ENCODE measurements at regions of chr12 and their contacts with region 1.

Region 1: GRCh38 chr12:132153501-132154340 is 9.5 kb downstream of the NOC4L start:
- DNase-seq: peak; percentile 47 to 88 (median 75)
- ATAC-seq: peak; percentile 95
- H3K4me3 ChIP-seq: no peak overlapping the region
- H3K4me3 Mint-ChIP-seq: peak overlapping the region; percentile 58
- H3K27ac ChIP-seq: no peak overlapping the region
- H3K27ac Mint-ChIP-seq: no peak overlapping the region
- H3K4me1 ChIP-seq: peaks cover 5% of the 10 kb centered on the region
- H3K4me1 Mint-ChIP-seq: peaks cover 2% of the 10 kb centered on the region
- H3K27me3 ChIP-seq: no peaks in the 10 kb centered on the region
- H3K27me3 Mint-ChIP-seq: no peaks in the 10 kb centered on the region
- CTCF ChIP-seq: peak; percentile 92

Region 2: GRCh38 chr12:132132609-132133430 is 20.9 kb before region 1 on chr12:
- CTCF ChIA-PET with region 1: no interaction called
- POLR2A ChIA-PET with region 1: no interaction called
- intact Hi-C with region 1: no loop called
- DNase-seq: no peak
- ATAC-seq: no peak
- H3K4me3 ChIP-seq: no peak overlapping the region
- H3K4me3 Mint-ChIP-seq: no peak overlapping the region
- H3K27ac ChIP-seq: no peak overlapping the region
- H3K27ac Mint-ChIP-seq: no peak overlapping the region
- H3K4me1 ChIP-seq: no peaks in the 10 kb centered on the region
- H3K4me1 Mint-ChIP-seq: no peaks in the 10 kb centered on the region
- H3K27me3 ChIP-seq: no peaks in the 10 kb centered on the region
- H3K27me3 Mint-ChIP-seq: no peaks in the 10 kb centered on the region
- CTCF ChIP-seq: no peak

Region 3: GRCh38 chr12:132210223-132211055 is 56.7 kb after region 1 on chr12:
- CTCF ChIA-PET with region 1: interaction called, 10 read pairs
- POLR2A ChIA-PET with region 1: no interaction called
- intact Hi-C with region 1: no loop called
- DNase-seq: peak in 1 of 9 experiments; percentile 23
- ATAC-seq: no peak
- H3K4me3 ChIP-seq: no peak overlapping the region
- H3K4me3 Mint-ChIP-seq: no peak overlapping the region
- H3K27ac ChIP-seq: no peak overlapping the region
- H3K27ac Mint-ChIP-seq: no peak overlapping the region
- H3K4me1 ChIP-seq: peaks cover 5% of the 10 kb centered on the region
- H3K4me1 Mint-ChIP-seq: peaks cover 4% of the 10 kb centered on the region
- H3K27me3 ChIP-seq: peaks cover 3 to 6% of the 10 kb centered on the region in 2 experiments
- H3K27me3 Mint-ChIP-seq: peaks cover 8% of the 10 kb centered on the region
- CTCF ChIP-seq: no peak

Region 4: GRCh38 chr12:132342251-132343227 is 188.8 kb after region 1 on chr12:
- CTCF ChIA-PET with region 1: no interaction called
- POLR2A ChIA-PET with region 1: no interaction called
- intact Hi-C with region 1: loop called in 1 of 2 experiments (anchors 10 kb)
- DNase-seq: peak in 2 of 9 experiments; percentile 14 to 29
- ATAC-seq: peak; percentile 31
- H3K4me3 ChIP-seq: no peak overlapping the region
- H3K4me3 Mint-ChIP-seq: no peak overlapping the region
- H3K27ac ChIP-seq: no peak overlapping the region
- H3K27ac Mint-ChIP-seq: no peak overlapping the region
- H3K4me1 ChIP-seq: no peaks in the 10 kb centered on the region
- H3K4me1 Mint-ChIP-seq: peaks cover 12% of the 10 kb centered on the region
- H3K27me3 ChIP-seq: no peaks in the 10 kb centered on the region
- H3K27me3 Mint-ChIP-seq: peaks cover 14% of the 10 kb centered on the region
- CTCF ChIP-seq: no peak

Region 5: DNA sequence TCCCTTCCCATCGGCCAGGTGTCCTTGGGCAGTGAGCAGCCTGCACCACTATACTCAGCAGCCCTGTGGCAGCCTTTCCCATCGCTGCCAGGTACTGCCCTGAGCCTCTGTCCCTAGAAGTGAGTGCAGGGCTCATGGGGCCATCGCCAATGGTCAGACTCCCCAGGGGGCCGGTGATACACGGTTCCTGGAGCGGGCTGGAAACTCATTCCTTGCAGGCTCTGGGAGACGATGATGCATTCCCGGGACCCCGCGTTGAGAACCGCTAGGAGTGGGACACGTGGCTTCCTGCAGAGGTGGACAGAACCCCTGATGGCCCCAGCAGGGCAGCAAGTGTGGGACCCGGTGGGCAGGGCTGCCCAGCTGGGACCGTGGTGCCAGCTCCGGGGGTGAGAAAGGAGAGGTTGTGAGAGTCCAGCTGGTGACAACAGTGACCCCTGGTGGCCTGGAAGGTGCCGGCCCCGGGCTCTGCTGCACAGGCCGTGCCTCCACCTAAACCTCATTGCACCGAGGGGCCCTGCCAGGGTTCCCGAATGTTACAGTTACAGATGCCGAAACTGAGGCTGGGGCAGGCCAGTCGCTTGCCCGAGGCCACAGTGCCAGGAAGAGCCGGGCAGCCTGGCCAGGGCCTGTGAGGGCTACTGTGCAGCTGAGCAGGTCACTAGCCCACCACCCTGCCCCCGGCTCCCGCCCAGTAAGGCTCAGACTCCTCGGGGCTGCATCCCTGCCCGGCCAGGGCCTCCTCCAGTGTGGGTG is 370.0 kb after region 1 on chr12:
- CTCF ChIA-PET with region 1: interaction called, 6 read pairs
- POLR2A ChIA-PET with region 1: no interaction called
- intact Hi-C with region 1: loop called in 1 of 2 experiments (anchors 1 kb)
- DNase-seq: peak; percentile 54 to 86 (median 74)
- ATAC-seq: peak; percentile 71
- H3K4me3 ChIP-seq: no peak overlapping the region
- H3K4me3 Mint-ChIP-seq: no peak overlapping the region
- H3K27ac ChIP-seq: no peak overlapping the region
- H3K27ac Mint-ChIP-seq: no peak overlapping the region
- H3K4me1 ChIP-seq: peaks cover 8% of the 10 kb centered on the region
- H3K4me1 Mint-ChIP-seq: peaks cover 12% of the 10 kb centered on the region
- H3K27me3 ChIP-seq: no peaks in the 10 kb centered on the region
- H3K27me3 Mint-ChIP-seq: no peaks in the 10 kb centered on the region
- CTCF ChIP-seq: peak; percentile 78

Region 6: DNA sequence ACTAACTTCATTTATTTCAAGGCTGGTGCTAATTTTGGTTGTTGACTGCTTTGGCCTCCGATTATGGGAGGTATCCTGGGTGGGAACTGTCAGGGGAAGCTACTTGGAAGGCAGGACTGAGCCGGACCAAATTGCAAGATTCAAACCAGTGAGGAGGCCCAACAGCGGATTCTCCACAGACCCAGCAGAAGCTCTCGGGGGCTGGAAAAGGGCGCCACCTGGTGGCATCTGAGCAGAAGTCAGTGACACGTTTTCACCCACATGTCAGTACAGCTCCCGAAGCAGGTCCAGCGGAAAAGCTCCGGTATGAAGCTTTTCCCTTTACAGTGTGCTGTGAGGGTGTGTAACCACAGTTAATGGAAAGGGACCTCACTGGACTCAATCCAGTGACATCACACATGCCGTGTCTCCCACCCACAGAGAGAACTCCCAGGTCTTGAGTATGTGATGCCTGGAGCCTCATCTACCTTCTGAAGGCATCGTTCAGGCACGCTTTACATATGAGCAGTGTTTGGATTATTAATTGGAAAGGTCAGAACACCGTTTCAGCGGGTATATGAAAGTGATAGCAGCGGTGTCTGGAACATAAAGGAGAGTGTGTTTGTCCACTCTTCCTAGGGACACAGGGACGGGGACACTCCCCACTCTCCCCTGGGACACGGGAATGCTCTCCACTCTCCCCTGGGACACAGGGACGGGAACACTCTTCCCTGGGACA is 461.3 kb after region 1 on chr12:
- CTCF ChIA-PET with region 1: no interaction called
- POLR2A ChIA-PET with region 1: no interaction called
- intact Hi-C with region 1: loop called (anchors 1 kb)
- DNase-seq: peak; percentile 62 to 90 (median 79)
- ATAC-seq: peak; percentile 91
- H3K4me3 ChIP-seq: no peak overlapping the region
- H3K4me3 Mint-ChIP-seq: no peak overlapping the region
- H3K27ac ChIP-seq: no peak overlapping the region
- H3K27ac Mint-ChIP-seq: no peak overlapping the region
- H3K4me1 ChIP-seq: peaks cover 11% of the 10 kb centered on the region
- H3K4me1 Mint-ChIP-seq: peaks cover 14% of the 10 kb centered on the region
- H3K27me3 ChIP-seq: peaks cover 20 to 22% of the 10 kb centered on the region in 2 experiments
- H3K27me3 Mint-ChIP-seq: peaks cover 45% of the 10 kb centered on the region
- CTCF ChIP-seq: peak; percentile 81

Measured in CD8-positive, alpha-beta T cell (primary cell).